Activated T-helper 1 cell treated with anti-CD3 and anti-CD28 coated beads, Interleukin-12 subunit alpha, Interleukin-12 subunit beta, Interleukin-2, Interleukin-4 antibody, amounts not matched to agents 30 ng/mL and 10 ng/mL and 1 ng/mL, durations not matched to agents 14 hours and 24 hours and 36 hours (primary cell): ENCODE measurements at regions of chr20 and their contacts with region 1.

Region 1: DNA sequence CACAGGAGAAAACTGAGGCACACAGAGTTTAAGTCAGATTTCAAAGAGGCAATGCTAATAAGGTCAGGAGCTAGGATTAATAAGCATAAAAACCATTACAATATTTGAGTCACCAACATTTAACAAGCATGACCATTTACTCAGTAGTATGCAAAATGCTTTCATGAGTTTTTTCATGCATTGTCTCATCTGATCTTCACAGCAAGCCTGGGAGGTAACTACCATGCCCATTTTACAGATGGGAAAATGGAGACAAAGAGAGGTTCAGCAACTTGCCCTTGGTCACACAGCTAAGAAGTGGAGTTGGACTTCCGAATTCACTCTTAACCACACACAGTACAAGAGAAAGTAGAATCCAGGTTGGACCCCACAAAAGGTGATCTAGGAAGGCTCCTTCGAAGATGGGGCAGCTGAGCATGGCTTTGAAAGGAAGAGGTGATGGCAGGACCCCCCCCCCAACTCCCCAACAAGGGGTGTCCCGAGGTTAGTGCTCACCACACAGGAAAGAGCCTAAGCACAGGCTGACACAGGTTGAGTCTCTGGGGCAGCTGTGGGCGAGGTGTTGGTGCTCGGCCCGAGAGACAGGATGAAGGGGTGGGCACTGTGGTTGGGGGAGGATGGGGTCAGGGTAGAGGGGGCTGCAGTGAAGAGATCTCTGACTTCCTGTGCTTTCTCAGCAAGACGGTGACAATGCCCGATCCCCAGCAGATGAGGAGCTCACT is 108.8 kb downstream of the PREX1 start:
- DNase-seq: peak; percentile 44
- H3K4me3 Mint-ChIP-seq: peak overlapping the region; percentile 5
- H3K27ac Mint-ChIP-seq: peak overlapping the region; percentile 88
- H3K4me1 Mint-ChIP-seq: peaks cover 89% of the 10 kb centered on the region
- H3K27me3 Mint-ChIP-seq: no peaks in the 10 kb centered on the region

Region 2: DNA sequence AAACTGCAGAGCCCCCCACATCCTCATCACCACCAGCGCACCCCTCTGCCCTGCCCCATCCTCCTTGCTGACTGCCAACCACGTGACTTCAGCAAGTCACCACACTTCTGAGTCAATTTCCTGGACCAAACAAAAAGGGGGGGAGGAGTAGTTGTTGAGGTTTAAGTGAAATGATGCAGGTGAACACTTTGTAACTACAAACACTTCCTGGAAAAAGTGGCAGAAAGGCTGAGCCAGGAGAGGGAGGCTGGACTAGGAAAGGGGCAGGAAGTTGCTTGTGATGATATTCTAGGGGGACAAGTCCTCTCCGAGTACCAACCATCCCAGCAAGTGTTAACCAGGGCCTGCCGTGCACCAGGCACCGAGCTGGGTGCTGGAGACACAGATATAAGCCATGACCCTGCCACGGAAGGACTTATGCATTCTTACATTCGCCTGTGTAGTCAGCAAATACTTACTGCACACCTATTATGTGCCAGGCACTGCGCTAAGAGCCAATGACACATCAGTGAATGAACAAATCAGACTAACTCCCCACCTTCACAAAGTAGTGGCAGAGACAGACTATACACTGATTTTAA is 41.5 kb after region 1 on chr20:
- intact Hi-C with region 1: loop called (anchors 1 kb)
- DNase-seq: peak; percentile 75
- H3K4me3 Mint-ChIP-seq: peak overlapping the region; percentile 78
- H3K27ac Mint-ChIP-seq: peak overlapping the region; percentile 96
- H3K4me1 Mint-ChIP-seq: peaks cover 86% of the 10 kb centered on the region
- H3K27me3 Mint-ChIP-seq: no peaks in the 10 kb centered on the region

Region 3: GRCh38 chr20:48769069-48769879 is 50.3 kb after region 1 on chr20:
- intact Hi-C with region 1: loop called (anchors 1 kb)
- DNase-seq: peak; percentile 86
- H3K4me3 Mint-ChIP-seq: peak overlapping the region; percentile 66
- H3K27ac Mint-ChIP-seq: peak overlapping the region; percentile 89
- H3K4me1 Mint-ChIP-seq: peaks cover 87% of the 10 kb centered on the region
- H3K27me3 Mint-ChIP-seq: no peaks in the 10 kb centered on the region